BJ (cell line): ENCODE measurements at regions of chr17 and their contacts with region 1.

Region 1: GRCh38 chr17:47096343-47096742 is 92.8 kb downstream of the CDC27 start:
- DNase-seq: no peak
- H3K4me3 ChIP-seq: no peak overlapping the region
- H3K27me3 ChIP-seq: no peaks in the 10 kb centered on the region
- CTCF ChIP-seq: no peak

Region 2: GRCh38 chr17:46979147-46979863 is 117.0 kb before region 1 on chr17 and contains the start of gene RPRML:
- CTCF ChIA-PET with region 1: no interaction called
- POLR2A ChIA-PET with region 1: no interaction called
- DNase-seq: no peak
- H3K4me3 ChIP-seq: peak within 1 kb of the TSS; percentile 35
- H3K27me3 ChIP-seq: peaks cover 32% of the 10 kb centered on the region
- CTCF ChIP-seq: no peak
- polyA plus RNA-seq, gene RPRML: not detected in 2 replicates

Region 3: GRCh38 chr17:47297661-47298615 is 201.6 kb after region 1 on chr17:
- CTCF ChIA-PET with region 1: no interaction called
- POLR2A ChIA-PET with region 1: no interaction called
- DNase-seq: no peak
- H3K4me3 ChIP-seq: no peak overlapping the region
- H3K27me3 ChIP-seq: no peaks in the 10 kb centered on the region
- CTCF ChIP-seq: no peak

Region 4: GRCh38 chr17:47423406-47424295 is 327.3 kb after region 1 on chr17:
- CTCF ChIA-PET with region 1: no interaction called
- POLR2A ChIA-PET with region 1: interaction called, 11 read pairs
- DNase-seq: no peak
- H3K4me3 ChIP-seq: peak overlapping the region; percentile 42
- H3K27me3 ChIP-seq: no peaks in the 10 kb centered on the region
- CTCF ChIP-seq: no peak